ENCODE measurements at regions of chr1 and their contacts with region 1.

Region 1: GRCh38 chr1:106620521-106620954 is 435.9 kb upstream of the PRMT6 start:
- DNase-seq: peak; percentile 97
- ATAC-seq: peak; percentile 99
- H3K4me3 ChIP-seq: no peak overlapping the region
- H3K27ac ChIP-seq: peak overlapping the region; percentile 97
- H3K4me1 ChIP-seq: peaks cover 40% of the 10 kb centered on the region
- H3K27me3 ChIP-seq: no peaks in the 10 kb centered on the region
- CTCF ChIP-seq: peak; percentile 50

Region 2: DNA sequence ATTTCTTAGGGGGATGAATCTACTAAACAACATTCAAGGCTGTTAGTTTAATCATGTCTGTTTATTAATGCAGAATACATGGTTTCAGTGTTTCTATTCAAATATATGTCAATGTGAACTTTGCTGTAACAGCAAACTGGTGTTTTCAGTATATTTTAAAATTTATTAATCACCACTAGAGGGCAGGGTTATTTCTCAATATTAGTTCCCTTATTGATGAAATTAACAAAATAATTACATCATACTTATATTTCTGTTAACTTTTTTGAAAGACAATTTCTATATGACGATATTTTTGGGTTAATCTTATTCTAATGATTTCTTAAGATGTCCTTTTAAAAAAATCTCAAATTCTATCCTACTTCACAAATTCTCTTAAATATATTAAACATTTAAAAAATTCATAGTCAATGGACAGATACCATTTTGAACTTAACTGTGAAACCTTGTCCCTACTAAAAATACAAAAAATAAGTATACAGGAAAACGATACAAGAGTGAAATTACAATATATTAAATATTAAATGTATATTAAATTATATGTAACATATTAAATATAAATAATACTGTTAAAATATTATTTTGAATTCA is 598.1 kb before region 1 on chr1:
- CTCF ChIA-PET with region 1: no interaction called
- POLR2A ChIA-PET with region 1: no interaction called
- intact Hi-C with region 1: loop called (anchors 5 kb)
- DNase-seq: peak; percentile 51
- ATAC-seq: no peak
- H3K4me3 ChIP-seq: no peak overlapping the region
- H3K27ac ChIP-seq: no peak overlapping the region
- H3K4me1 ChIP-seq: no peaks in the 10 kb centered on the region
- H3K27me3 ChIP-seq: no peaks in the 10 kb centered on the region
- CTCF ChIP-seq: peak; percentile 68

Region 3: GRCh38 chr1:106134561-106134960 is 486.0 kb before region 1 on chr1:
- CTCF ChIA-PET with region 1: no interaction called
- POLR2A ChIA-PET with region 1: no interaction called
- intact Hi-C with region 1: loop called (anchors 10 kb)
- DNase-seq: peak; percentile 23
- ATAC-seq: peak; percentile 96
- H3K4me3 ChIP-seq: no peak overlapping the region
- H3K27ac ChIP-seq: no peak overlapping the region
- H3K4me1 ChIP-seq: 0 out of 2 replicates have a peak, but pooled peaks cover 2% of the 10 kb centered on the region
- H3K27me3 ChIP-seq: no peaks in the 10 kb centered on the region
- CTCF ChIP-seq: no peak

Region 4: GRCh38 chr1:106768501-106768900 is 148.0 kb after region 1 on chr1:
- CTCF ChIA-PET with region 1: no interaction called
- POLR2A ChIA-PET with region 1: no interaction called
- intact Hi-C with region 1: loop called (anchors 5 kb)
- DNase-seq: peak; percentile 91
- ATAC-seq: peak; percentile 73
- H3K4me3 ChIP-seq: peak overlapping the region; percentile 36; the same call in 1 of the 2 replicates
- H3K27ac ChIP-seq: peak overlapping the region; percentile 81
- H3K4me1 ChIP-seq: peaks cover 40% of the 10 kb centered on the region
- H3K27me3 ChIP-seq: no peaks in the 10 kb centered on the region
- CTCF ChIP-seq: no peak

Region 5: GRCh38 chr1:106937104-106937503 is 316.6 kb after region 1 on chr1:
- CTCF ChIA-PET with region 1: no interaction called
- POLR2A ChIA-PET with region 1: no interaction called
- intact Hi-C with region 1: loop called (anchors 5 kb)
- DNase-seq: peak; percentile 96
- ATAC-seq: peak; percentile 100
- H3K4me3 ChIP-seq: no peak overlapping the region
- H3K27ac ChIP-seq: peak overlapping the region; percentile 70
- H3K4me1 ChIP-seq: peaks cover 18% of the 10 kb centered on the region
- H3K27me3 ChIP-seq: no peaks in the 10 kb centered on the region
- CTCF ChIP-seq: no peak

Measured in PC-3 (cell line).